B cell (primary cell): ENCODE measurements at regions of chr14 and their contacts with region 1.

Region 1: GRCh38 chr14:21868442-21869046 is 194.9 kb upstream of the OR4E1 start:
- DNase-seq: peak; percentile 47
- ATAC-seq: peak; percentile 43
- H3K4me3 ChIP-seq: no peak overlapping the region
- H3K4me3 Mint-ChIP-seq: no peak overlapping the region
- H3K27ac ChIP-seq: no peak overlapping the region
- H3K27ac Mint-ChIP-seq: no peak overlapping the region
- H3K4me1 ChIP-seq: no peaks in the 10 kb centered on the region
- H3K4me1 Mint-ChIP-seq: no peaks in the 10 kb centered on the region
- H3K27me3 ChIP-seq: peaks cover 0 to 7% (median 2%) of the 10 kb centered on the region in 4 experiments
- H3K27me3 Mint-ChIP-seq: peaks cover 52% of the 10 kb centered on the region
- CTCF ChIP-seq: peak; percentile 82

Region 2: GRCh38 chr14:21840765-21841164 is 27.8 kb before region 1 on chr14:
- CTCF ChIA-PET with region 1: no interaction called
- POLR2A ChIA-PET with region 1: no interaction called
- intact Hi-C with region 1: no loop called
- DNase-seq: no peak
- ATAC-seq: no peak
- H3K4me3 ChIP-seq: no peak overlapping the region
- H3K4me3 Mint-ChIP-seq: no peak overlapping the region
- H3K27ac ChIP-seq: no peak overlapping the region
- H3K27ac Mint-ChIP-seq: no peak overlapping the region
- H3K4me1 ChIP-seq: no peaks in the 10 kb centered on the region
- H3K4me1 Mint-ChIP-seq: no peaks in the 10 kb centered on the region
- H3K27me3 ChIP-seq: peaks cover 0 to 7% (median 0%) of the 10 kb centered on the region in 4 experiments
- H3K27me3 Mint-ChIP-seq: peaks cover 33% of the 10 kb centered on the region
- CTCF ChIP-seq: no peak

Region 3: DNA sequence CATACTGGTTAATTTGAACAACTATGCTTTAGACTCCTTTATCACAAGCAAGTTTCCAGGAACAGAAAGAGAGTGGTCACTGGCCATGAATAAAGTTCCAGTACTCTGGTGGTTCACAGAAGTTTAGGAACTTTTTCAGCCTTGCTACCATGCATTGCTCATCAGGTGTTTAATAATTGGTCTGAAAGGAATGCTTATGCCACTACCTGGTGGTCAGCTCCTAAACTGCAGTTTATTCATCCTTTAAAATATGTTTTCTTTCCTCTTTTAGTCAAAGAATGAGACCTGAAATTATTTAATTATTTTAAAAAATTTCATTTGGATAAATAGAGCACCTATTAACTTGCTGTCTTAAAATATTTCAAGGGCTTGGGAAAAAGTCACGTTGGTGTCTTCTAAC is 65.1 kb after region 1 on chr14:
- CTCF ChIA-PET with region 1: interaction called, 4 read pairs
- POLR2A ChIA-PET with region 1: no interaction called
- intact Hi-C with region 1: loop called (anchors 2 kb)
- DNase-seq: peak; percentile 65
- ATAC-seq: peak; percentile 57
- H3K4me3 ChIP-seq: no peak overlapping the region
- H3K4me3 Mint-ChIP-seq: no peak overlapping the region
- H3K27ac ChIP-seq: no peak overlapping the region
- H3K27ac Mint-ChIP-seq: no peak overlapping the region
- H3K4me1 ChIP-seq: no peaks in the 10 kb centered on the region
- H3K4me1 Mint-ChIP-seq: no peaks in the 10 kb centered on the region
- H3K27me3 ChIP-seq: no peaks in the 10 kb centered on the region
- H3K27me3 Mint-ChIP-seq: no peaks in the 10 kb centered on the region
- CTCF ChIP-seq: peak; percentile 85